Heart right ventricle (tissue), 16 donors: ENCODE measurements at regions of chr10 and their contacts with region 1.

Region 1: GRCh38 chr10:79221110-79222051 is 125.9 kb upstream of the PPIF start:
- DNase-seq: peak; percentile 80 to 86
- ATAC-seq: peak; percentile 55 to 83 (median 77)
- H3K4me3 ChIP-seq: no peak overlapping the region
- H3K27ac ChIP-seq: peak overlapping the region; percentile 75 to 94 (median 88)
- H3K4me1 ChIP-seq: peaks cover 47 to 70% (median 65%) of the 10 kb centered on the region in 9 donors
- H3K27me3 ChIP-seq: no peaks in the 10 kb centered on the region
- CTCF ChIP-seq: peak in 5 of 9 donors; percentile 10 to 44 (median 31)

Region 2: DNA sequence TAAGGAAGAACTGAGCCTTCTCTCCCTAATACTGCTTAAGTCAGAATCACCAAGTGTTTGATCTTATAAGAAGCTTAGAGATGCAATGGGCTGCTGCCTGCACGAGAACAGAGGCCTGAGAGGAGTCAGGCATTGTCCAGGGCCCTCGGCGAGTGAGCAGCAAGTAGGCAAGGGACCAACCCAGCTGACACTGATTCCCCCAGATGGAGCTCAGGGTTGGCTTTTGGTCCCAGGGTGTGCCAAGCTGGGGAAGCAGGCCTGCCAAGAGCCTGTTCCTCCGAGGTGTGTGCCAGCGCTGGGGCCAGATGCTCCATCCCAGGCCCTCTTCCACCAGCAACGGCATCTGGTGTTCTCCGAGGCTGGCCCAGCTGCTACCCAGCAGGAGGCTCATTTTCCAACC is 374.6 kb before region 1 on chr10:
- intact Hi-C with region 1: no loop called
- DNase-seq: peak; percentile 53 to 55
- ATAC-seq: peak; percentile 77 to 96 (median 93)
- H3K4me3 ChIP-seq: no peak overlapping the region
- H3K27ac ChIP-seq: no peak overlapping the region
- H3K4me1 ChIP-seq: no peaks in the 10 kb centered on the region
- H3K27me3 ChIP-seq: peaks cover 0 to 4% (median 0%) of the 10 kb centered on the region in 7 donors
- CTCF ChIP-seq: no peak

Region 3: GRCh38 chr10:79184145-79184625 is 37.2 kb before region 1 on chr10:
- intact Hi-C with region 1: no loop called
- DNase-seq: no peak
- ATAC-seq: peak in 1 of 8 donors; percentile 28
- H3K4me3 ChIP-seq: no peak overlapping the region
- H3K27ac ChIP-seq: peak overlapping the region; percentile 11 to 91 (median 58)
- H3K4me1 ChIP-seq: peaks cover 73 to 100% (median 100%) of the 10 kb centered on the region in 9 donors
- H3K27me3 ChIP-seq: no peaks in the 10 kb centered on the region
- CTCF ChIP-seq: no peak

Region 4: GRCh38 chr10:79242620-79243152 is 21.3 kb after region 1 on chr10:
- intact Hi-C with region 1: loop called in 1 of 10 experiments (anchors 2 kb)
- DNase-seq: peak; percentile 59 to 68
- ATAC-seq: peak; percentile 4 to 55 (median 33)
- H3K4me3 ChIP-seq: peak overlapping the region; percentile 18 to 70 (median 54)
- H3K27ac ChIP-seq: peak overlapping the region; percentile 59 to 95 (median 88)
- H3K4me1 ChIP-seq: peaks cover 69 to 93% (median 88%) of the 10 kb centered on the region in 9 donors
- H3K27me3 ChIP-seq: no peaks in the 10 kb centered on the region
- CTCF ChIP-seq: no peak

Region 5: DNA sequence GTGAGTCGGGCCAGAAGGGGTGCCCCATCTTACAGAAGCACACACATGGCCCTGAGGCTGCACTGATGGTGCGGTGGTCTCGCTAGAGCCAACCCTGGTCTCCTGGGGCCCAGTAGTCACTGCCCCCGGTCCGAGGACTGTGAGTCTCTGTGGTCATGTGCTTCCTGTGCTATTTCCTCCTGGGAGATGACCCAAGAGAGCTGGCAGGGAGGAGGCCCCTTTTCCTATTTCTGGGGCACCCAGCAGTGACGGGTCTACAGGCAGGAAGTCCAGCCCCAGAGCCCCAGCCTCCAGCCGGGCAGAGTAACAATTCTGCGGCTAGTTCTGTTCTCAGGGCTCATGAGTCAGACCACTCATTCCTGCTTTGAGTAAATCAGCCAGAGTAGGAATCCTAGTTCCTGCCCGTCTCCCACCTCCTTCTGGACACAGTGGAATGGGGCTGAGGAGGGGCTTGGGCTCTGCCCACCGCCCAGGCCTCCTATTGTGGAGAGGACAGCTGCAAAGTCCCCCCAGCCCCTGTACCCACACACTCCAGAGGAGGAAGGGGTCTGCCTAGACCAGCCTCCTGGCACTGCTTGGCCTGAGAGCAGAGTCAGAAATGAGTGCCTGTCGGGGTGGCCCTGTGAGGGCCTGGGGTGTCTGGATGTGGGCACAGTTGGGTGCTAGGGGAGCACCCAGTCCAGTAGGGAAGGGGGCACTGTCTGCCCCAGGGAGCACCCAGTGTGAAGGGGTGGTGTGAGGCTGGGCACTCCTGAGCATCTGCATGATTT is 45.3 kb after region 1 on chr10:
- intact Hi-C with region 1: loop called in 2 of 10 experiments (anchors 5 kb)
- DNase-seq: peak; percentile 61 to 82
- ATAC-seq: peak; percentile 49 to 83 (median 71)
- H3K4me3 ChIP-seq: peak overlapping the region in 4 of 10 donors; percentile 2 to 25 (median 12)
- H3K27ac ChIP-seq: peak overlapping the region; percentile 61 to 91 (median 85)
- H3K4me1 ChIP-seq: peaks cover 52 to 100% (median 94%) of the 10 kb centered on the region in 9 donors
- H3K27me3 ChIP-seq: no peaks in the 10 kb centered on the region
- CTCF ChIP-seq: no peak

Region 6: GRCh38 chr10:79274279-79275104 is 53.1 kb after region 1 on chr10:
- intact Hi-C with region 1: loop called in 5 of 10 experiments (anchors 2 to 5 kb)
- DNase-seq: peak; percentile 83 to 87
- ATAC-seq: peak; percentile 79 to 92 (median 87)
- H3K4me3 ChIP-seq: no peak overlapping the region
- H3K27ac ChIP-seq: peak overlapping the region; percentile 73 to 93 (median 87)
- H3K4me1 ChIP-seq: peaks cover 52 to 89% (median 80%) of the 10 kb centered on the region in 9 donors
- H3K27me3 ChIP-seq: no peaks in the 10 kb centered on the region
- CTCF ChIP-seq: peak in 6 of 9 donors; percentile 10 to 41 (median 24)

Region 7: DNA sequence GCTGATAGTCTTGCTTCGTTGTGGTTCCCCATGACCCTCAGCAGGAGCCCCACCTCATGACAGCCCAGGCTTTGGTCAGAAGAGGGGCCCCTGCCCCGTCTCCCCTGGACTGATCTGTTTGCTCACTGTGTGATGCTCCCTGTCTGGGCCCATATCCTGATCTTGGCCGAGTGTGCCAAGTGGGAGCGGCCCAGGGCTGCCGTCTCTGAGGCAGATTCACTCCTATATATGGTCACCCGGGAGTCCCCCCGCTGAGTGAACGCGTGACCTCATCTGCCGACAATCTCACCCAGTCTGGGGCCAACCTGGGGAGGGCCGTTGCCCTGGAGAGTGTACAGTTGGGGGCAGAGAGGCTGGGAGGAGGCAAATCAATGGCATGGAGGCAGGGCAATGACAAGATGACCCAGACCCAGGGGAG is 160.4 kb after region 1 on chr10:
- intact Hi-C with region 1: no loop called
- DNase-seq: peak; percentile 62 to 76
- ATAC-seq: peak; percentile 61 to 84 (median 74)
- H3K4me3 ChIP-seq: no peak overlapping the region
- H3K27ac ChIP-seq: peak overlapping the region; percentile 9 to 78 (median 74)
- H3K4me1 ChIP-seq: peaks cover 31 to 43% (median 40%) of the 10 kb centered on the region in 9 donors
- H3K27me3 ChIP-seq: no peaks in the 10 kb centered on the region
- CTCF ChIP-seq: no peak